ENCODE measurements at regions of chr20 and their contacts with region 1.

Region 1: GRCh38 chr20:49384437-49385088 is 97.9 kb downstream of the KCNB1 start:
- DNase-seq: no peak
- H3K4me3 ChIP-seq: no peak overlapping the region
- H3K27ac ChIP-seq: peak overlapping the region in 3 of 4 donors; percentile 13 to 38 (median 37)
- H3K4me1 ChIP-seq: peaks cover 4 to 41% (median 18%) of the 10 kb centered on the region in 3 donors
- H3K27me3 ChIP-seq: no peaks in the 10 kb centered on the region
- CTCF ChIP-seq: peak in 5 of 6 experiments; percentile 42 to 71 (median 47)
- POLR2A ChIP-seq: no peak

Region 2: GRCh38 chr20:49303065-49303552 is 81.5 kb before region 1 on chr20:
- intact Hi-C with region 1: no loop called
- DNase-seq: no peak
- H3K4me3 ChIP-seq: no peak overlapping the region
- H3K27ac ChIP-seq: no peak overlapping the region
- H3K4me1 ChIP-seq: peaks cover 0 to 16% (median 0%) of the 10 kb centered on the region in 3 donors
- H3K27me3 ChIP-seq: no peaks in the 10 kb centered on the region
- CTCF ChIP-seq: no peak
- POLR2A ChIP-seq: no peak

Region 3: GRCh38 chr20:49484180-49485140 is 99.9 kb after region 1 on chr20:
- intact Hi-C with region 1: loop called (anchors 10 kb)
- DNase-seq: no peak
- H3K4me3 ChIP-seq: peak overlapping the region; percentile 19 to 67 (median 41)
- H3K27ac ChIP-seq: peak overlapping the region in 2 of 4 donors; percentile 79 to 84
- H3K4me1 ChIP-seq: peaks cover 7 to 46% (median 10%) of the 10 kb centered on the region in 3 donors
- H3K27me3 ChIP-seq: peaks cover 0 to 85% (median 5%) of the 10 kb centered on the region in 4 donors
- CTCF ChIP-seq: peak; percentile 63 to 88 (median 78)
- POLR2A ChIP-seq: no peak

Measured in esophagus squamous epithelium (tissue), 5 donors.